Right ventricle myocardium inferior (tissue), 1 donor: ENCODE measurements at regions of chr20 and their contacts with region 1.

Region 1: DNA sequence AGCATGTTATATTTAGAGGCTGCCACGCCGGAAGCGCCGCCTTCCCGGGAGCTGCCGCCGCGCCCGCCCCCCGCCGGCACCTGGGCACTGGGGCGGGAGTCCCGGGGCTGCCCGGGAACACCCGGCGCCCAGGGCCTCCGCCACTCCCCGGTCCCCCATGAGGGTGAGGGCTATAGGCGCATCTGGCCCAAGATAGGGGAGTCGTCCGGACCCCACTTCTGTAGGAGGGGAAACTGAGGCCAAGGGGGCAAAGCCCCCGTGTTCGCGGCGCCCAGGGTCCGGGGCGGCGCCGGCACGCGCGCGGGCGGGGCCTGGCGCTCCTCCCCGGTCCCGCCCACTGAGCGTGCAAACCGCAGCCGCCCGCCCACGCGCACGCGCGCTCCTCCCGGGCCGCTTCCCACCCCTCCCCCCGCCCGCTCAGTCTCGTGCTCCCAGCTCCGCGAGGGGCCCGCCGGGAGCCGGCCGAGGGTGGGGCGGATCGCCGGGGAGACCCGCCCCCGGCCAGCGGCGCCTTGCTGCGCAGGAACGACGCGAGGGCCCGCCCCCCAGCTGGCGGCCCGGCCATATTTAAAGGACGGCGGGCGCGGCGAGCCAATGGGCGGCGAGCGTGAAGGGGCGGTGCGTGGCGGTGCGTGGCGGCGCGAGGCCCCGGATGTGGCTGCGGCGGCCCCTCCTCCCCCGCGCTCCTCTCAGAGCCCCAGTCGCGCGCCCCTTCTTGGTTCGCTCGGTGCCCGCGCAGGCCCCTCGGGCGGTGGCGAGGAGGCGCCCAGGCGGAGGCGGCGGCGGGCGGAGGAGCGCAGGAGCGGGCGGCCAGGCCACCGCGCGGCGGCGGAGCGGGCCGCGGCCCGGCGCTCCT is at the start of gene LSM14B:
- DNase-seq: peak; percentile 98
- ATAC-seq: peak; percentile 94
- total RNA-seq, gene LSM14B: 55.2 TPM

Region 2: GRCh38 chr20:62050166-62051120 is 71.6 kb before region 1 on chr20:
- intact Hi-C with region 1: no loop called
- DNase-seq: no peak
- ATAC-seq: no peak

Region 3: DNA sequence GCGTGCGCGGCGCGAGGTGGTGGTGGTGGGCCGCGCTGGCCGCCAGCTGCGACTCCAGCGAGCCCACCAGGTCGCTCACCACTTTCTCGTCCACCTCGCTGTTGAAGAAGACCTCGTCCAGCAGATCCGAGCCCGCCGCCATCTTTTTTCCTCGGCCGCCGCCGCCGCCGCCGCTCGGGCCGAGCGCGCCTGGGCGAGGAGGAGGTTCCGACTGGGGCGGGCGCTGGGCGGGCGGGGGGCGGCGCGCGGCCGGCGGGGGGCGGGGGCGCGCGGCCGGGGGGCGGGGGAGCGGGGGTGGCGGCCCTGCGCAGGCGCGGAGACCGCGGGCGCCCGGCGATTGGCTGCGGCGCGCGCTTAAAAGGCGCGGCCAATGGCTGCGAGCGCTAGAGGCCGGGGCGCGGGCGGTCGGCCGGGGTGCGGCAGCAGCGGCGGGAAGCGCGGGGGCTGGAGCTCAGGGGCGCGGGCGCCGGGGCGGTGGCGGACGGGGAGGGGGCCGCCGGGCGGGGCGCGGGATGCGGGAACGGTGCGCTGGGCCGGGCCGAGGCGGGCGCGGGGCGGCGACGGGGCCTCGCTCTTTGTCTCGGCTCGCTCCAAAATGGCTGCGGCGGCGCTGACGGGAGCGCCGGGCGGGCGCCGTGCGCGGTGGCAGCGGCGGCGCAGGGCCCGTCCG is 56.2 kb before region 1 on chr20 and contains the start of gene TAF4:
- intact Hi-C with region 1: loop called (anchors 2 kb)
- DNase-seq: peak; percentile 90
- ATAC-seq: peak; percentile 67
- total RNA-seq, gene TAF4: 10.7 TPM

Region 4: DNA sequence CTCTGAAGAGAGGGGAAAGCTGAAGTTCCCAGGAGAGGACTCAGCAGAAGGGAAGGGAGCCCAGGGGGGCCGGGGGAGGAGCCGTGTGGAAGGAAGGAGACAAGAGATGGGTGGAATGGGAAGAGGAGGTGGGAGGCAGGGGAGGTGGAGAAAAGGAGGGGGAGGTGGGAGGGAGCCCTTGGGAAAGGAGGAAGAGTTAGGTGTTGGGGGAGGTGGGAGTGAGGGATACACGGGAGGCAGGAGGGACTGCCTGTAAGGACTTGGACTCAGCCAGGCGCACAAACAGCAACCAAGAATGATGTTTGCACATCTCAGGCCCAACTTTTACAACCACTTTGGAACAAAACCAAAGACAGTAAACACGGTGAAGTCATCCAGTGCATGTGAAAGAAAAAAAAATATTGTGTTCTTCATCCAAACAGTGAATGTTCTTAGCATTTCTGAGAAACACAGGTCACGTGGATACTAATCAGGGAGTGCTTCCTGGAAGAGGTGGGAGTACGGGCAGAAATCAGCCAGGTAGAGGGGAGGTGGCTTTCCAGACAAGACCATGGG is 17.1 kb before region 1 on chr20:
- intact Hi-C with region 1: no loop called
- DNase-seq: no peak
- ATAC-seq: no peak

Region 5: GRCh38 chr20:62136283-62137091 is 14.5 kb after region 1 on chr20:
- intact Hi-C with region 1: loop called (anchors 1 kb)
- DNase-seq: peak; percentile 83
- ATAC-seq: peak; percentile 29